Endothelial cell of umbilical vein (primary cell): ENCODE measurements at regions of chr1 and their contacts with region 1.

Region 1: GRCh38 chr1:145927063-145927886 is at the start of gene RBM8A:
- DNase-seq: peak; percentile 99
- H3K4me3 ChIP-seq: peak within 1 kb of the TSS; percentile 80 to 89 (median 80)
- H3K27ac ChIP-seq: peak within 1 kb of the TSS; percentile 94
- H3K4me1 ChIP-seq: peaks cover 8% of the 10 kb centered on the region
- H3K27me3 ChIP-seq: no peaks in the 10 kb centered on the region
- CTCF ChIP-seq: peak; percentile 64 to 70
- POLR2A ChIP-seq: peak; percentile 88
- total RNA-seq, gene RBM8A: 194 and 200 TPM in 2 replicates

Region 2: DNA sequence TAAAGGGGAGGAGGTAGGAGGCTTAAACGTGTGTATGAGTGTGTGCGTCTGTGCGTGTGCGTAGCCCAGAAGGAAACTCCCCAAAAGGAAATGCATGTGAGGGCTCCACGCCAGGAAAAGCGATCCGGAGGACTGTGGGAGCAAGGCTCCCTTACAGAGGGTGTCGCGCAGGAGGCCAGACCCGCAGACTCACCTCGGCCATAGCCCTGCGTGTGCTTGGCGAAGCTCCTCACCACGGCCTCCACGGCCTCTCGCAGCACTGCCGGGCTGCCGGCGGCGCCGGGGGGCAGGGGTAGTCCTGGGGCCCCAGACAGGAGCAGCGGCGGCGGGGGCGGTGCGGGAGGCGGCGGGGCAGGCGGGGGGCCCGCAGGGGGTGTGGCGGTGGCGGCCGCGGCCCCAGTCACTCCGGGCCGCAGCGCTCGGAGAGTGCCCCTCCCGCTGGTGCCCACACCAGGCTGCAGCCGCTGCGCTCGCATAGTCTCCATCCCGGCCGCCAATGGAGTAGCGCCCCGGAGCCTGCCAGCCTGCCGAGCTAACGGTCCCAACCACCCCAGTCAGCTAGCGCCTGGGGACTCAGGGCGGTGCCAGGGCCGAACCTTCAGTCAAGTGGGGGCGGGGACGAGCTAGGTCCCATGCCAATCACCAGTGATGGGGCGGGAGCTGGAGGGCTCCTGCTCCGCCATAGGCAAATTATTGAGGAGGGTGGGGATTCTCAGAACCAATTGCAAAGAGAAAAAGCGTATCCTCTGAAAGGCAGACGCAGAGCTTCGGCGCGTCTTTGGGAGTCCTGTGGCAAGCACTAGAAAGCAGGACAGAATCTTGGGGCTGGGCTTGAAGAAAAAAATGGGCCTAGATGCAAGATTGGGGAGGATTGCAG is 30.4 kb after region 1 on chr1 and contains the start of gene LIX1L:
- CTCF ChIA-PET with region 1: interaction called, 17 read pairs
- POLR2A ChIA-PET with region 1: interaction called, 11 read pairs
- dilution Hi-C with region 1: no loop called
- intact Hi-C with region 1: loop called (anchors 1 kb)
- DNase-seq: peak; percentile 97
- H3K4me3 ChIP-seq: peak within 1 kb of the TSS; percentile 71 to 87 (median 74)
- H3K27ac ChIP-seq: peak within 1 kb of the TSS; percentile 96
- H3K4me1 ChIP-seq: peaks cover 50% of the 10 kb centered on the region
- H3K27me3 ChIP-seq: no peaks in the 10 kb centered on the region
- CTCF ChIP-seq: no peak
- POLR2A ChIP-seq: peak; percentile 98
- total RNA-seq, gene LIX1L: 54.9 and 55.6 TPM in 2 replicates

Region 3: DNA sequence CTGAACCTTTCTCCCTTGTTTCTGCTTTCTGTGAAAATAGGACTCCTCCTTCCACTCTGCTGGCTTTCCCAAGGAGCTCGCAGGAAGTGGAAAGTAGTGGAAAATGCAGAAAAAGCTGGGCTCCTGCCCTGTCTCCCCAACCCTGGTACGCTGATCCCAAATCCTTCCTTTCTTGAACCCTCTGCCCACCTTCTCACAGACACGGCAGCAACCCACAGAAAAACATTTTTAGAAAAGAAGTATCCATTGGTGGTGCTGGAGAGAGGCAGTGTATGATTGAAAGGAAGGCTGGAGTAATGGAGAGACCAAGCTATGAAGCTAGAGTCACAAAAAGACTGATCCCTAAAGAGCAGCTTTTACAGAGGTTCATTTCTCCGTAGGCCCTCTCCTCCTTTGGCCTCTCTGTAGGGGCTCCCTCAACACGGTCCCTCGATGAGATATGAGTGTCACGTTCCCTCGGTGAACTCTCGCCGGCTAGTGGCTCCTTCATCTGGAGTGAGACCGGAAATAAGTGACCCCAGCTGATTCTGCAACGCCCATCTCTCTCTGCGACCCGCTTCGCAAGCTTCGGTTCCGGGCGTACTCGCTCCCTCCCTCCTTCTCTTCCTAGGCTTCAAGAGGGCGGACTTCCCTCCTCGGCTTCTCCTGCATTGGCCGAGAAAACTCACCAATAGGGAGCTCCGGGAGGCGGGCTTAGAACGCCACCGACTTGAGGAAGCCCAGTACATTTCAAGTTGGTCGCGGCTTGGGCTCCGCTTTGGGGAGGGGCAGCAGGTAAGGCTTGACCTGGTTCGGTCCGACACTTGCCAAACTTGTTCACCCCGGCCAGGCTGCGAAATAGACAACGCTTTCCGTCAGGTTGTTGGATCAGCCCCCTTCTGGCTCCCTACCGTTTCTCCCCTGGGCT is 37.0 kb after region 1 on chr1 and contains the starts of genes ANKRD34A and POLR3GL:
- CTCF ChIA-PET with region 1: interaction called, 17 read pairs
- POLR2A ChIA-PET with region 1: interaction called, 4 read pairs
- dilution Hi-C with region 1: no loop called
- intact Hi-C with region 1: loop called (anchors 1 kb)
- DNase-seq: peak; percentile 96
- H3K4me3 ChIP-seq: peak within 1 kb of the TSS; percentile 38 to 77 (median 60)
- H3K27ac ChIP-seq: peak within 1 kb of the TSS; percentile 43
- H3K4me1 ChIP-seq: peaks cover 34% of the 10 kb centered on the region
- H3K27me3 ChIP-seq: no peaks in the 10 kb centered on the region
- CTCF ChIP-seq: no peak
- POLR2A ChIP-seq: peak; percentile 82
- total RNA-seq, gene ANKRD34A: 0.24 and 0.60 TPM in 2 replicates
- total RNA-seq, gene POLR3GL: 15.3 and 18.8 TPM in 2 replicates

Region 4: DNA sequence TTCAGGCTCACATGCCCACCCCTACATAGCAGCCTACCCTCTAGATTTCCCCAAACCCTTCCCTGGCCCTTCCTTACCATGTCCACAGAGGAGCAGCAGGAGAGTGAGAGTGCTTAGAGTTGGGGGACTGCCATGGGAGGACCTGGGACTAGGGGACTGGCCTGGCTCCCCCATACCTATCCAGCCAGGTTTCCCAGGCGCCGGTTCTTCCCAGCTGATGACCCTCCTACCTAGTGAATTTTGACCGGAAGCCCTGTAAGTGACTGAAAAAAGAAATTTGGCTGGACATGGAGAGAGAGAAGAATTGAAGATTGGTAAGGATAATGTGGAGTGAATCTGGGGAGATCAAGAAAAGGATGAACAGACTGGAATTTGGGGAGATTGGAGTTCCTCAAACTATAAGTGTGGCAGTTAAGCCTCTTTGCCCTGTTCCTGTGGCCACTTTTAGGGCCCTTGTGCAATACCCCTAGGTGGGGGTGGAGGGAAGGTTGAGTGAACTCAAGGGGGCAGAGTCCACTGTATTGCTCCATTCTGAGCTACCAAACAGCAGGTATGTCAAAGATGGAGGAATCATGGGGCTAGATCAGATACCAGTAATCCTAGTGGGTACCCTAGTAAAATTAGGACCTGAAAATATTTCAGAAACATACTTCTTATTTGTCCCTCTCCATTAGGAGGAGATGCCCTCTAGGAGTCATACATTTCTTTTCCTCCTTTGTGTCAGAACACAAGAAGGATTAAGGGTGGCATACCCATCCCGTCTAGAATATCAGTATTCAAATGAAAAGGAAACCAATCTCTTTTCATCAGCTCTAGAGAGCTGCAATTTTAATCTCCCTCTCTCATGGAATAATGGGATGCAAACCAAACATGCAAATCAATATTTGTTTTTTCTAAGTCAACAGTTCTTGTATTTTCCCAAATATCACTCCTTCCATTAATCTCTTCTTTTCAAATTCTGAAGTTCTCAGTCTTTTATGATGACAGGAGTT is 93.1 kb after region 1 on chr1:
- CTCF ChIA-PET with region 1: no interaction called
- POLR2A ChIA-PET with region 1: no interaction called
- dilution Hi-C with region 1: no loop called
- intact Hi-C with region 1: no loop called
- DNase-seq: no peak
- H3K4me3 ChIP-seq: no peak overlapping the region
- H3K27ac ChIP-seq: no peak overlapping the region
- H3K4me1 ChIP-seq: no peaks in the 10 kb centered on the region
- H3K27me3 ChIP-seq: peaks cover 46 to 57% of the 10 kb centered on the region in 2 experiments
- CTCF ChIP-seq: no peak
- POLR2A ChIP-seq: no peak